Heart left ventricle (tissue), 16 donors: ENCODE measurements at regions of chr9 and their contacts with region 1.

Region 1: DNA sequence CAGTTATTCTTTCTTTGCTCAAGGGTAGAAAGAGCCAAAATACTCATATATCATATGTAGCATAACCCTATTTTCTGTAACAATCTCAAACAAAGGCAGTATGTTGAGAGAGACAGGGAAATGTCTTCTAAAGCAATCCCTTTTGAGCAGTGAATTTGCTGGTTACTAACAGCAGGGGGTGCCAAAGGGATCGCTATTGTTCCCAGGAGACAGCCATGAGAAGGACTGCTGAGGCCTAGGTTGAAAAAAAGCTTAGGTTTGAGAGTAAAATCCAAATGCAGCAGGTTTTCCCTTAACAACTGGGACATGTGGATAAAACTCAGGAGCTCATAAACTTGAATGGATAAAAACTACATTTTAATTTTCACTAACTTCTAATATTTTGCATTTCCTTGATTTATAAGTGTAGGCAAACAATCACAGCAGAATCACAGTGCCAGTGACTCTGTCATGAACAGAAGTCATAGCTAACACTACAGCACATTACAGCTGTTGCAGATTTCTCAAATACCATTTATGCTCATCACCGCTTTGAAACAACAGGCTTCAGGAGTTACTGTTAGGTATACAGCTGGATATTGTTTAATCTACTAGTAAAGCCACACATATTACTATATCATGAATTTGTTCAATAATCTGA is 148.4 kb downstream of the MAPKAP1 start:
- DNase-seq: peak in 4 of 5 donors; percentile 57 to 60 (median 58)
- ATAC-seq: peak in 3 of 4 donors; percentile 65 to 83 (median 82)
- H3K4me3 ChIP-seq: no peak overlapping the region
- H3K27ac ChIP-seq: peak overlapping the region in 3 of 12 donors; percentile 18 to 37 (median 20)
- H3K4me1 ChIP-seq: peaks cover 0 to 26% (median 5%) of the 10 kb centered on the region in 12 donors
- H3K27me3 ChIP-seq: no peaks in the 10 kb centered on the region
- CTCF ChIP-seq: peak; percentile 67 to 86 (median 74)
- POLR2A ChIP-seq: no peak

Region 2: DNA sequence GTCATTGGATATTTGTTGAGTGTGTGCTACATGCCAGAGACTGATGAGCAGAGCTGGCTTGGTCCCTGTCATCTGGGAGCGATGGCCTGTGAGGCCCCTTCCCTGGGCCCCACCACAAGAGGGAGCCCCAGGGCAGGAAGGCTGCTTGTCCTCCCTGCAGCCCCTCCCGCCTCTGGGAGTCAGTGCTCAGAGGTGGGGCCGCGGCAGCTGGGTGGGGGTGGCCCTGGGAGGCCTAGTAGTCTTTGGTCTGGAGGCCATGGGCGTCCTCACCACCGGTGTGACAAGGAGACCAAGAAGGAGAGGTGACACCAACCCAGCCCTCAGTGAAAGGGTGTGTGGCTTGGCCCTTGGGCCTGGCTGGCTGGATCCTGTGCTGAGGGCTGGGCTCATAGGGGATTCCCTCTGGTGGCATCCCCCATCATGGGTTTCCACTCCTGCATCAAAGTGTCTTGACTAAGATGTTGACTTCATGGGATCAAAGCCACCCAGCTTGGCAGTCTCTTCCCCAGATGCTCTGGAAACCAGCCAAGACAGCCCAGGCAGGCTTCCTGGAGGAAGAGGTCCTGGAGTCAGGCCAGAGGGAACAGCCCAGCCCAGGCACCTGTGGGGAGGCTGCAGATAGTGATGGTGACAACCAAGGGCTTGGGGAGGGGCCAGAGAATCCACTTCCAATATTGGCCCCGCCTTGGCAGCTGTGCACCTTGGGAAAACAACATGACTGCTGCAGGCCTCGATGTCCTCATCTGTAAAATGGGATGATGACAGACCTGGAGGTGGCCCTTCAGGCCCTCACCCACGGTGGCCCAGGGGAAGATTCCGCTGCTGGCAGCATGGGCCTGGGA is 130.3 kb before region 1 on chr9:
- intact Hi-C with region 1: loop called in 1 of 10 experiments (anchors 10 kb)
- DNase-seq: peak in 2 of 5 donors; percentile 33 to 50
- ATAC-seq: peak in 3 of 4 donors; percentile 40 to 74 (median 64)
- H3K4me3 ChIP-seq: no peak overlapping the region
- H3K27ac ChIP-seq: no peak overlapping the region
- H3K4me1 ChIP-seq: no peaks in the 10 kb centered on the region
- H3K27me3 ChIP-seq: no peaks in the 10 kb centered on the region
- CTCF ChIP-seq: peak; percentile 28 to 57 (median 40)
- POLR2A ChIP-seq: no peak

Region 3: DNA sequence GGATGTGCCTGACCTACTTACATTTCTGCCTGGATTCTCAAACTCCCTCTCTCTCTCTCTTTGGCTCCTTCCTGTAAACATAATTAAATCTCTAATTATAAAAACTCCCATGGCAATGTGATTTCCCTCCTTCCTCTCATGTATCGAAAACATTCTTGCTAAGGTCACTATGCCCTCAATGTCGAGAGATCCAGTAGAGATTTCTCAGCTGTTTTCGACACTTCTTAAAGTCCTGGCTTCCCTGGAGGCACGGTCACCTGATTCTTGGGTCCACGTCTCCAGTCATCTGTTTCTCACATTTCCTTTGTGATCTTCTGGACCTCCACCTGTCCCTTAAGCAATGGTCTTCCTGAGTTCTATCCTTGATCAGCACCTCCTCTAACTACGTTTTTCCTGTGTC is 107.5 kb before region 1 on chr9:
- intact Hi-C with region 1: no loop called
- DNase-seq: no peak
- ATAC-seq: no peak
- H3K4me3 ChIP-seq: no peak overlapping the region
- H3K27ac ChIP-seq: no peak overlapping the region
- H3K4me1 ChIP-seq: peaks cover 0 to 6% (median 0%) of the 10 kb centered on the region in 12 donors
- H3K27me3 ChIP-seq: no peaks in the 10 kb centered on the region
- CTCF ChIP-seq: no peak
- POLR2A ChIP-seq: no peak

Region 4: GRCh38 chr9:125626187-125626586 is 67.6 kb after region 1 on chr9:
- intact Hi-C with region 1: loop called in 6 of 10 experiments (anchors 2 to 5 kb)
- DNase-seq: no peak
- ATAC-seq: no peak
- H3K4me3 ChIP-seq: no peak overlapping the region
- H3K27ac ChIP-seq: no peak overlapping the region
- H3K4me1 ChIP-seq: peaks cover 0 to 28% (median 0%) of the 10 kb centered on the region in 12 donors
- H3K27me3 ChIP-seq: no peaks in the 10 kb centered on the region
- CTCF ChIP-seq: no peak
- POLR2A ChIP-seq: no peak

Region 5: DNA sequence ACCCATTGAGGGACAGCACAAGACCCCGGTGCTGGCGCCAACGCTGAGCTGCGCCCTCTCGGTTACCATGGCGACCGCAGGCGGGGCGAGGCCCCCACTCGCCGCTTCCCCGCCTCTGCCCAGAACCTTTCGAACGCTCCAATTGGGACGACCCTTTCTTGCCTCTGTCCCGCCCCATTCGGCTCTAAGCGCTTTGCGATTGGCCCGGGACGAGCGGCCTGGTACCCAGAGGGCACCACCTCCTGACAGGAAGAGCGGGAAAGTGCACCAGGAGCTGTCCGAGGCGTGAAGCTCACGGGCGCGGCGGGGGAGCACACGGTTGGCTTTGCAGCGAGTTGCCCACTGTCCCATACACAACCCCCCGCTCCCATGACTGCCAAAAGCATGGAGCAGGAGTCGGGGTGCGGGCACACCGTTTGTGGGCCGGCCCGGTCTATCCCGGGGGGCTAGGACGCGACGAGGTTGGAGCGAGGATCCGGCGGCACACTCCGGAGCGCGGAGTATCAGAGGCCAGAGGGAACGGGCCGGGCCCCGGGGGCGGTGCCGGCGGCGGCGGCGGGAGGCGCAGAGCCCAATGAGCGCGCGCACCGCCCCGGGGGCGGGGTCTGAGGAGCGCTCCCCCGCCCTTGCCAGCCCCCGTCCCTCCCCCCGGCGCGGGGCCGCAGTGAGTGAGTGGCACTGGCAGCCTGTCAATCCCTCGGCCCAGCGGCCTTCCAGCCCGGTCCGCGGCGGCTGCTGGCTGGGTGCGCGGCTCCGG is 187.6 kb after region 1 on chr9:
- intact Hi-C with region 1: loop called in 4 of 10 experiments (anchors 5 to 10 kb)
- DNase-seq: peak; percentile 96 to 97 (median 97)
- ATAC-seq: peak; percentile 95 to 96 (median 96)
- H3K4me3 ChIP-seq: peak overlapping the region; percentile 43 to 96 (median 76)
- H3K27ac ChIP-seq: peak overlapping the region; percentile 40 to 94 (median 88)
- H3K4me1 ChIP-seq: peaks cover 0 to 38% (median 12%) of the 10 kb centered on the region in 12 donors
- H3K27me3 ChIP-seq: no peaks in the 10 kb centered on the region
- CTCF ChIP-seq: peak in 2 of 12 donors; percentile 6 to 9
- POLR2A ChIP-seq: peak in 1 of 2 donors; percentile 65

Region 6: DNA sequence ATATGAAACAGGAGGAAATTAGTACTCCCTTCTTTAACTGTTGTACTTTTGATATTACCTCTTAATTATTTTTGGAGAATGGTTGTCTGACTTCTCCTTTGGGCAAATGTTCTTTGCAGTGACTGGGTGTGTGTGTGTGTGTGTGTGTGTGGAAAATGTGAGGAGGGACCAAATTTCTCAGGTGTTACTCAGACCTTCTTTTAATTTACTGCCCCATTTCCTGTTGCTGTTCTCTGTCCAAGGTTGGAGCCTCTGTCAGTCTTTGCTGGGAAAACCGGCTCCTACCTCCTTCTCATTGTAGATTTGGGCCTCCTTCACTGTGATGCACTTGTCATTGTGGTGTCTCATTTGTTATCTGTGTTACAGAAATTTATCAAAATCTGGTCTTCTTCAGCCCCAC is 257.0 kb after region 1 on chr9:
- intact Hi-C with region 1: no loop called
- DNase-seq: no peak
- ATAC-seq: no peak
- H3K4me3 ChIP-seq: no peak overlapping the region
- H3K27ac ChIP-seq: peak overlapping the region in 1 of 12 donors; percentile 32
- H3K4me1 ChIP-seq: peaks cover 0 to 13% (median 1%) of the 10 kb centered on the region in 12 donors
- H3K27me3 ChIP-seq: no peaks in the 10 kb centered on the region
- CTCF ChIP-seq: no peak
- POLR2A ChIP-seq: no peak

Region 7: DNA sequence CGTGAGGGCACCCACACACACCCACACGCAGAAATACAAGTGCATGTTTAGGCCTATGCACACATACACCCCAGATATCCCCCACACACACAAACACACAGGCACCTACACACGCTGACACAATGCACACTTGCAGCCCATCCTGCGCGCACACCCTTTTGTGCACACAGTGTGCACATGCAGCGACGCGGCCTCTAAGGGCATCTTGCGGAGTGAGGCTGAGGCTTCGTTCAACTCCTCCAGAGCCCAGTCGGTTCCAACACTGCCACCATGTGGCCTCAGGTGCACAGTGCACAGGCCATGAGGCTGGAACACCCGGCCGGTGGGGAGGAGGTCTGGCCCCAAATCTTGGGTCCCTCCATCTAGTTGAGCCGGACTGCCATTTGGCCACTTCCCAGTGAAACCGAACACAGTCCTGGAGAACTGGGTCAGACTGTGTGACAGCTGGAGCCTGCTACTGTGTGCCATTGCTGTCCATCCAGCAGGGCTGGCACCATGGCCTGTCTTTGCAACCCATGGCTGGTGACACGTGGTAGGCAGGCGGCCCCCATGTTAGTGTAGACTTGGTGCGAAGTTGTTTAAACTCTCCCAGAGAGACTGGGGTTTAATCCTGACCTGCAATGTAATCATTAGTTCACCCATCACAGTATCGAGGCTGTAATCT is 670.3 kb after region 1 on chr9:
- intact Hi-C with region 1: loop called in 5 of 10 experiments (anchors 2 to 10 kb)
- DNase-seq: peak; percentile 50 to 85 (median 64)
- ATAC-seq: peak; percentile 78 to 93 (median 91)
- H3K4me3 ChIP-seq: no peak overlapping the region
- H3K27ac ChIP-seq: no peak overlapping the region
- H3K4me1 ChIP-seq: no peaks in the 10 kb centered on the region
- H3K27me3 ChIP-seq: peaks cover 0 to 18% (median 0%) of the 10 kb centered on the region in 9 donors
- CTCF ChIP-seq: peak; percentile 85 to 93 (median 90)
- POLR2A ChIP-seq: no peak